A673 (cell line): ENCODE measurements at regions of chr2 and their contacts with region 1.

Region 1: GRCh38 chr2:46650556-46651001 is 171.2 kb downstream of the TMEM247 start:
- DNase-seq: peak; percentile 86
- H3K4me3 ChIP-seq: no peak overlapping the region
- H3K27ac ChIP-seq: no peak overlapping the region
- H3K4me1 ChIP-seq: peaks cover 6% of the 10 kb centered on the region
- H3K27me3 ChIP-seq: no peaks in the 10 kb centered on the region
- CTCF ChIP-seq: peak; percentile 92

Region 2: GRCh38 chr2:45993476-45993991 is 657.0 kb before region 1 on chr2:
- CTCF ChIA-PET with region 1: no interaction called
- POLR2A ChIA-PET with region 1: no interaction called
- intact Hi-C with region 1: loop called (anchors 5 kb)
- DNase-seq: peak; percentile 73
- H3K4me3 ChIP-seq: no peak overlapping the region
- H3K27ac ChIP-seq: no peak overlapping the region
- H3K4me1 ChIP-seq: no peaks in the 10 kb centered on the region
- H3K27me3 ChIP-seq: no peaks in the 10 kb centered on the region
- CTCF ChIP-seq: peak; percentile 82

Region 3: GRCh38 chr2:46887028-46887885 is 236.7 kb after region 1 on chr2:
- CTCF ChIA-PET with region 1: no interaction called
- POLR2A ChIA-PET with region 1: no interaction called
- intact Hi-C with region 1: loop called (anchors 5 kb)
- DNase-seq: no peak
- H3K4me3 ChIP-seq: no peak overlapping the region
- H3K27ac ChIP-seq: no peak overlapping the region
- H3K4me1 ChIP-seq: no peaks in the 10 kb centered on the region
- H3K27me3 ChIP-seq: peaks cover 8% of the 10 kb centered on the region
- CTCF ChIP-seq: no peak